GM12878 (cell line): ENCODE measurements at regions of chr12 and their contacts with region 1.

Region 1: GRCh38 chr12:53213348-53213747 is 6.3 kb upstream of the ITGB7 start:
- DNase-seq: no peak
- ATAC-seq: peak; percentile 83
- H3K4me3 ChIP-seq: no peak overlapping the region
- H3K27ac ChIP-seq: no peak overlapping the region
- H3K4me1 ChIP-seq: peaks cover 27% of the 10 kb centered on the region
- H3K27me3 ChIP-seq: no peaks in the 10 kb centered on the region
- CTCF ChIP-seq: peak; percentile 89 to 96 (median 94)
- EP300 ChIP-seq: no peak
- POLR2A ChIP-seq: no peak
- RAD21 ChIP-seq: peak; percentile 96

Region 2: DNA sequence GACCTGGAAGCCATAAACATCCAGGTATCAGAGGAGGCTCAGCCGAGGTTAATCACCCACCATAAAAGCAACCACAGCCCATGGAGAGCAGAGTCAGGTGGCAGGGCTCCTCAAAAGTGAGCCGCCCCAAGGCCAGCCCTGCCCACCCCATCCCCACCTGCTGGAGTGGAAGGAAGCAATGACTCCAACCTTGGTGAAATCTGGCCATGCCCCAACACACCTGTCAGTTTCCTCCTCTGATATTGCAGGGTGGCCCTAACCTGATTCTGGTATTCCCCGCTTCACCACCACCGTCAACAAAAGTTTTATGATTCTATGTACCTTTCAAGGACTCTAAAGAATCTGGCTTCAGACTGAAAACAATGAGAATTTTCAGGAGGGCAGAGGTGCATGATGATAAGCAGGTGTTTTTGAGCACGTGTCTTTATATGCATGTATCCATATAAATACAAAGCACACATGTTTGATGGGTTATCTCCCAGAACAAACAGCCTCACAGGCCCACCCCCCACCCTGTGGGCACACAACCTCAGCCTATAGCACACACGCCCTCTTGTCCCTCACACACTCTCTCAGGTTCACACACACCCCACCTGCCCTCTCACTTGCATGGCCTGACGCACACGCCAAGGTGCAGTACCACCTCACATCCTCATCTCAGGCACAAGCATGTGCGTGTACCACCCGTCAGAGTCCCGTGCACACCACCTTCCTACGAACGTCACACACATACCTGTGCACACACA is 300.1 kb before region 1 on chr12:
- CTCF ChIA-PET with region 1: no interaction called
- POLR2A ChIA-PET with region 1: no interaction called
- RAD21 ChIA-PET with region 1: no interaction called
- SMC1A ChIA-PET with region 1: no interaction called
- in situ Hi-C with region 1: no loop called
- intact Hi-C with region 1: no loop called
- DNase-seq: no peak
- ATAC-seq: no peak
- H3K4me3 ChIP-seq: no peak overlapping the region
- H3K27ac ChIP-seq: no peak overlapping the region
- H3K4me1 ChIP-seq: 0 out of 2 replicates have a peak, but pooled peaks cover under 1% of the 10 kb centered on the region
- H3K27me3 ChIP-seq: peaks cover 0 to 3% of the 10 kb centered on the region in 2 experiments; a peak in 2 of 4 replicates
- CTCF ChIP-seq: no peak
- EP300 ChIP-seq: no peak
- POLR2A ChIP-seq: no peak
- RAD21 ChIP-seq: no peak

Region 3: GRCh38 chr12:53093777-53094393 is 119.5 kb before region 1 on chr12:
- CTCF ChIA-PET with region 1: no interaction called
- POLR2A ChIA-PET with region 1: no interaction called
- RAD21 ChIA-PET with region 1: no interaction called
- SMC1A ChIA-PET with region 1: no interaction called
- in situ Hi-C with region 1: no loop called
- intact Hi-C with region 1: no loop called
- DNase-seq: no peak
- ATAC-seq: peak; percentile 68
- H3K4me3 ChIP-seq: no peak overlapping the region
- H3K27ac ChIP-seq: no peak overlapping the region
- H3K4me1 ChIP-seq: peaks cover 6% of the 10 kb centered on the region
- H3K27me3 ChIP-seq: peaks cover 0 to 3% of the 10 kb centered on the region in 2 experiments; a peak in 3 of 4 replicates
- CTCF ChIP-seq: no peak
- EP300 ChIP-seq: no peak
- POLR2A ChIP-seq: no peak
- RAD21 ChIP-seq: no peak

Region 4: GRCh38 chr12:53200458-53201176 is 12.7 kb before region 1 on chr12:
- CTCF ChIA-PET with region 1: interaction called, 78 read pairs
- POLR2A ChIA-PET with region 1: interaction called, 33 read pairs
- RAD21 ChIA-PET with region 1: interaction called, 26 read pairs
- SMC1A ChIA-PET with region 1: interaction called, 11 read pairs
- in situ Hi-C with region 1: no loop called
- intact Hi-C with region 1: no loop called
- DNase-seq: peak; percentile 79
- ATAC-seq: peak; percentile 61
- H3K4me3 ChIP-seq: peak overlapping the region; percentile 90
- H3K27ac ChIP-seq: peak overlapping the region; percentile 69
- H3K4me1 ChIP-seq: peaks cover 47% of the 10 kb centered on the region
- H3K27me3 ChIP-seq: no peaks in the 10 kb centered on the region
- CTCF ChIP-seq: no peak
- EP300 ChIP-seq: peak; percentile 76 to 87
- POLR2A ChIP-seq: no peak
- RAD21 ChIP-seq: no peak

Region 5: GRCh38 chr12:53251477-53252348 is 38.4 kb after region 1 on chr12:
- CTCF ChIA-PET with region 1: interaction called, 136 read pairs
- POLR2A ChIA-PET with region 1: interaction called, 4 read pairs
- RAD21 ChIA-PET with region 1: interaction called, 101 read pairs
- SMC1A ChIA-PET with region 1: interaction called, 32 read pairs
- in situ Hi-C with region 1: no loop called
- intact Hi-C with region 1: loop called (anchors 2 kb)
- DNase-seq: peak; percentile 24
- ATAC-seq: peak; percentile 92
- H3K4me3 ChIP-seq: peak overlapping the region; percentile 99
- H3K27ac ChIP-seq: peak overlapping the region; percentile 66
- H3K4me1 ChIP-seq: peaks cover 28% of the 10 kb centered on the region
- H3K27me3 ChIP-seq: no peaks in the 10 kb centered on the region
- CTCF ChIP-seq: peak; percentile 52 to 83 (median 64); a peak in 5 of 6 replicates
- EP300 ChIP-seq: no peak
- POLR2A ChIP-seq: peak; percentile 92
- RAD21 ChIP-seq: peak; percentile 83

Region 6: GRCh38 chr12:53287741-53288216 is 74.4 kb after region 1 on chr12:
- CTCF ChIA-PET with region 1: interaction called, 315 read pairs
- POLR2A ChIA-PET with region 1: interaction called, 3 read pairs
- RAD21 ChIA-PET with region 1: interaction called, 102 read pairs
- SMC1A ChIA-PET with region 1: interaction called, 96 read pairs
- in situ Hi-C with region 1: loop called (anchors 5 kb)
- intact Hi-C with region 1: loop called (anchors 1 kb)
- DNase-seq: peak; percentile 17
- ATAC-seq: peak; percentile 99
- H3K4me3 ChIP-seq: no peak overlapping the region
- H3K27ac ChIP-seq: no peak overlapping the region
- H3K4me1 ChIP-seq: no peaks in the 10 kb centered on the region
- H3K27me3 ChIP-seq: no peaks in the 10 kb centered on the region
- CTCF ChIP-seq: peak; percentile 76 to 80 (median 78)
- EP300 ChIP-seq: no peak
- POLR2A ChIP-seq: no peak
- RAD21 ChIP-seq: peak; percentile 84

Region 7: DNA sequence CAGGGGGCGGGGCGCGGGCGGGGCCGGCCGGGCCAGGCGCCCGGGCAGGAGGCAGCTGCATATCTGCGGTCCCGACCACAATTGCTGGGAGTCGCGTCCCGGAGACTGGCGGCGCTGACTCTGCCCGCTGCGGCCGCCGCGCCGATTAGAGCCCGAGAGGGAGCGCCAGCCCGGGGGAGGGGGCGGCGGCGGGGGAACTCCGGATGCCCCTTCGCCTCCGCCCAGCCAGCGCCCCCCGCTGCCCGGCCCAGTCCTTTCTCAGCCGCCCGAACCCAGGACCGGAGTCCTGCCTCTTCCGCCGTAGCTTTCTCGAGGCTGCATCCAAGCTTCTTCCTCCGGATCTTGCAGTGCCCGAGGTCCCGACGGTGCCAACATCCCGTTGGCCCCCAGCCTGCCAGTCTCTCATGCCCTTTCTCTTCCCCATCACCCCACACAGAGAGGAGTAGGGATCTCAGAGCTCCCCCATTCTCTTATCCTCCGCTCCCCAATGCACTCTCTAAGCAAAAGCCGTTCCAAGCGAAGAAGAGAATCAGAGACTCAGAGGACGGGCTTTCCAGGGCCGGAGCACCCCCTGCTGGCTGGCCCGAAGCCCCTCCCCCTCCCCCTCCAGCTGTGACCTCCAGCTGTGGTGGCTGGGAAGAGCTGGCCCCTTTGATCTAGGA is 131.6 kb after region 1 on chr12:
- CTCF ChIA-PET with region 1: interaction called, 27 read pairs
- POLR2A ChIA-PET with region 1: no interaction called
- RAD21 ChIA-PET with region 1: interaction called, 10 read pairs
- SMC1A ChIA-PET with region 1: interaction called, 31 read pairs
- in situ Hi-C with region 1: no loop called
- intact Hi-C with region 1: loop called (anchors 1 kb)
- DNase-seq: no peak
- ATAC-seq: peak; percentile 95
- H3K4me3 ChIP-seq: peak overlapping the region; percentile 80
- H3K27ac ChIP-seq: no peak overlapping the region
- H3K4me1 ChIP-seq: peaks cover 5% of the 10 kb centered on the region
- H3K27me3 ChIP-seq: peaks cover 0 to 5% of the 10 kb centered on the region in 2 experiments; a peak in 1 of 4 replicates
- CTCF ChIP-seq: peak; percentile 68 to 90 (median 87)
- EP300 ChIP-seq: no peak
- POLR2A ChIP-seq: 0 out of 2 replicates have a peak, but pooled peaks have one; percentile 32
- RAD21 ChIP-seq: peak; percentile 81

Region 8: DNA sequence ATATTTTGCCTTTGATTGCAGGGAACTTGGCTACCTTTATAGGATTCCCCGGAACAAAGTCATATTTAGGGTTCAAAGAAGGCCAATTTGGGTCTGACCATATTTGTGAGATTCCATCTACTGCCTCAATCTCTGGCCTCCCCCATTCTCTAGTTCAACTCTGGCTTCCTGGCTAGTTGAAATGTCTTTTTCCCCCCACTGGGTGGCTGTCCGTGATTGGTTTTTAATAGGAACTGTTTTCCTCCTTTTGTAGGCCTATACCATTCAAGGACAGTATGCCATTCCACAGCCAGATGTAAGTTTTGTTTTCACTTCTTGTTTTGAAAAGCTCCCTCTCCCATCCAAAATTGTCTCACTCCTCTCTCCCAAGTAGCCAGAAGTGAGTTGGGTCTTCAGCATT is 252.3 kb after region 1 on chr12:
- CTCF ChIA-PET with region 1: no interaction called
- POLR2A ChIA-PET with region 1: no interaction called
- RAD21 ChIA-PET with region 1: no interaction called
- SMC1A ChIA-PET with region 1: no interaction called
- in situ Hi-C with region 1: no loop called
- intact Hi-C with region 1: no loop called
- DNase-seq: no peak
- ATAC-seq: no peak
- H3K4me3 ChIP-seq: no peak overlapping the region
- H3K27ac ChIP-seq: no peak overlapping the region
- H3K4me1 ChIP-seq: peaks cover 4% of the 10 kb centered on the region
- H3K27me3 ChIP-seq: no peaks in the 10 kb centered on the region
- CTCF ChIP-seq: no peak
- EP300 ChIP-seq: no peak
- POLR2A ChIP-seq: no peak
- RAD21 ChIP-seq: no peak